Activated T-helper 1 cell treated with anti-CD3 and anti-CD28 coated beads, Interleukin-12 subunit alpha, Interleukin-12 subunit beta, Interleukin-2, Interleukin-4 antibody, amounts not matched to agents 30 ng/mL and 10 ng/mL and 1 ng/mL, durations not matched to agents 14 hours and 24 hours and 36 hours (primary cell): ENCODE measurements at regions of chrX and their contacts with region 1.

Region 1: GRCh38 chrX:76172325-76172893 is 453 bp upstream of the PBDC1 start:
- DNase-seq: no peak
- H3K4me3 Mint-ChIP-seq: peak overlapping the region; percentile 94
- H3K27ac Mint-ChIP-seq: peak overlapping the region; percentile 98
- H3K4me1 Mint-ChIP-seq: peaks cover 38% of the 10 kb centered on the region
- H3K27me3 Mint-ChIP-seq: no peaks in the 10 kb centered on the region

Region 2: GRCh38 chrX:76202471-76202870 is 30.1 kb after region 1 on chrX:
- intact Hi-C with region 1: no loop called
- DNase-seq: no peak
- H3K4me3 Mint-ChIP-seq: no peak overlapping the region
- H3K27ac Mint-ChIP-seq: no peak overlapping the region
- H3K4me1 Mint-ChIP-seq: no peaks in the 10 kb centered on the region
- H3K27me3 Mint-ChIP-seq: peaks cover 2% of the 10 kb centered on the region

Region 3: DNA sequence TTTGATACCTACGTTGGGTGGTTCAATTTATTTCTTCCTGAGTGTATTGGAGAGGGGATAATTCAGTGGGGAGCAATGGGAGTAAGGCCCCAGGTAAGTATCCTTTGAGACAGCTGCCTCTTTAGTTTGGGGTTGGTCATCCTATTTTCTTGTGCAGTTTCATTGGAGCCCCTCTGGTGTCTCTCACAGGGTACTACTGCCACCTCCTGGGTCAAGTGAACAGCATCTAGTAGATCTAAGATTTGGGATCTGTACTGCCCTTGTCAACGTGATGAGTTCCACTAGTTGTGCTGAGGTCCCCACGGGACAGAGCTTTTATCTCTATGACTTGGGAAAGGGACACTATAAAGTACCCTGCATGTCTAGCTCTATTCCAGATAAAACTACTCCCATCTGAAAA is 81.0 kb after region 1 on chrX:
- intact Hi-C with region 1: loop called (anchors 1 kb)
- DNase-seq: peak; percentile 1
- H3K4me3 Mint-ChIP-seq: no peak overlapping the region
- H3K27ac Mint-ChIP-seq: no peak overlapping the region
- H3K4me1 Mint-ChIP-seq: no peaks in the 10 kb centered on the region
- H3K27me3 Mint-ChIP-seq: peaks cover 2% of the 10 kb centered on the region

Region 4: GRCh38 chrX:76427560-76428242 is 255.3 kb after region 1 on chrX and contains the start of gene MAGEE1:
- intact Hi-C with region 1: loop called (anchors 2 kb)
- DNase-seq: peak; percentile 56
- H3K4me3 Mint-ChIP-seq: peak within 1 kb of the TSS; percentile 85
- H3K27ac Mint-ChIP-seq: peak within 1 kb of the TSS; percentile 71
- H3K4me1 Mint-ChIP-seq: peaks cover 13% of the 10 kb centered on the region
- H3K27me3 Mint-ChIP-seq: peaks cover 2% of the 10 kb centered on the region
- total RNA-seq, gene MAGEE1: 1.8 and 1.9 TPM in 2 replicates